ENCODE measurements at regions of chr3 and their contacts with region 1.

Region 1: GRCh38 chr3:124772081-124772831 is 42.0 kb downstream of the UMPS start:
- DNase-seq: no peak
- H3K4me3 ChIP-seq: no peak overlapping the region
- H3K27ac ChIP-seq: peak overlapping the region; percentile 55 to 80 (median 74)
- H3K4me1 ChIP-seq: peaks cover 22 to 33% (median 26%) of the 10 kb centered on the region in 4 donors
- H3K27me3 ChIP-seq: no peaks in the 10 kb centered on the region
- CTCF ChIP-seq: no peak
- EP300 ChIP-seq: no peak
- POLR2A ChIP-seq: no peak

Region 2: DNA sequence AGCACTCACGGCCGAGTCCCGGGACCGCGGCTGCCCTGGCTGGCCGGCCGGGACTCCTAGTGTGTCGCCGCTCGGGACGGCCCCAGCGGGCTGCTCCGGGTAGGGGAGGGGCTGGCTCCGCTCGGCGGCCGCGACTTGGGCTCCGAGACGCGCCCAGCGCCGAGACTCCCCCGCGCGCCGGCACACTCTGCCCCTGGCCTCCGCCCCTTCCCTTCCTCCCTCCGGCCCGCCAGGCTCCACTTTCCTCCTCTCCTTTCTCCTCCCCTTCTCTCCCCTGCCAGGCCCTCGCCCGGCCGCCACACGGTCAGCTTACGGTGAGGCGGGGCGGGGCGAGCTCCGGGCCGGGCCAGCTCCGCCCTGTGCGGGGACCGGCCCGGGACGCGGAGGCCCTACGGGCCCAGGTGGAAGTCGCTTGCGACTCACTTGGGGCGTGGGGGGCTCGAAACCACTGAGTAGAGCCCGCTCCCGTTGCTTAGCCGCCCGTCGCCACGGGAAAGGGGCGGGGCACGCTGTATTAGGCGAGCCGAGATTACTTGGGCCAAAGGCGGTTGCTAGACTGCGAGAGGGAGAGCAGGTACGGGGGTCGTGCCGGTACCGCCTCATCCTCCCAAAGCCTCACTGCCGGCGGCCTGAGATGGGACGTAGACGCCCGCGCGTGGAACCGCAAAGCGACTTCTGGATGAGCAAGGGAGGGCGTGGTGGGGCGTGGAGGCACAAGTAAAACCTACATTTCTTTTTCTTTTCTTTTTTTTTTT is 115.1 kb after region 1 on chr3 and contains the start of gene ITGB5:
- in situ Hi-C with region 1: no loop called
- intact Hi-C with region 1: loop called (anchors 5 kb)
- DNase-seq: peak; percentile 83
- H3K4me3 ChIP-seq: peak within 1 kb of the TSS; percentile 72 to 92 (median 86)
- H3K27ac ChIP-seq: peak within 1 kb of the TSS; percentile 92 to 96 (median 94)
- H3K4me1 ChIP-seq: peaks cover 4 to 28% (median 12%) of the 10 kb centered on the region in 4 donors
- H3K27me3 ChIP-seq: no peaks in the 10 kb centered on the region
- CTCF ChIP-seq: peak in 1 of 5 experiments; percentile 10
- EP300 ChIP-seq: no peak
- POLR2A ChIP-seq: peak; percentile 61
- total RNA-seq, gene ITGB5: 62.8 to 572 (median 105) TPM

Measured in transverse colon (tissue), 4 donors.